CD8-positive, alpha-beta T cell (primary cell): ENCODE measurements at regions of chr19 and their contacts with region 1.

Region 1: DNA sequence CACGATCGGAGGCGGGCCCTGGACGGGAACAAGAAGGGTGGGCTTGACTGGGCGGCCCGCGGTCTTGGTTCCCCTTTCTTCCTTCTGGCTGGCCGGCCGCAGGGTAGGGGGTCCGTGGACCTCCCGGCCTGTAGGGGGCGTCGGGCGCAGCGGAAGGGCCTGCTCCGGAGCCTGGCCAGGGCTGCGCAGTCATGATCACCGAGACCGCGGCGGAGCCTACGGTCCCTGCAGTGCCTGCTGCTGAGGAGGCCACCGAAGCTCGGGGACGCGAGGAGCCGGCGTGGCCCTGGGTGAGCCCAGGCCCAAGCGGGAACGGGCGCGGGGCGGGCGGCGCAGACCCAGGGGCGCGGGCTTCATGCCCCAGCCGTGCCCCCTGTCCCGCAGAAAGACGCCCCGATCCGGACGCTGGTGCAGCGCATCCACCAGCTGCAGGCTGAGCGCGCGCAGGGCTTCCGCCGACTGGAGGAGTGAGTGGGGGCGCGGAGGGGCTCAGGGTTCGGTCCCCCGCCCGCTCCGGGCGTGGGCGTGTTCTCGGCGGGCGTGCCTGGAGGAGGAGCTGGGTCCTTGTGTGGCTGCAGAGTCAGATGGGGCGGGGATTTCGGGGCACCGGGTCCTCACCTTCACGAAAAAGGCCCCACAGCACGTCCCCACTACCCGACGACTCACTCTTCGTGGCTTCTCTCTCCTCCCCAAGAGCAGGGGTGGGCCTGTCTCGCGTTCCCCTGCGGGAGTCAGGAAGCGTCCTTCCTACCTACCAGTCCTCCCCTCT is at the start of gene REX1BD:
- DNase-seq: peak; percentile 71 to 94 (median 89)
- ATAC-seq: peak; percentile 81
- H3K4me3 ChIP-seq: peak within 1 kb of the TSS; percentile 62 to 83
- H3K4me3 Mint-ChIP-seq: peak within 1 kb of the TSS; percentile 93
- H3K27ac ChIP-seq: peak within 1 kb of the TSS; percentile 83 to 86
- H3K27ac Mint-ChIP-seq: peak within 1 kb of the TSS; percentile 95
- H3K4me1 ChIP-seq: peaks cover 31% of the 10 kb centered on the region
- H3K4me1 Mint-ChIP-seq: peaks cover 34% of the 10 kb centered on the region
- H3K27me3 ChIP-seq: no peaks in the 10 kb centered on the region
- H3K27me3 Mint-ChIP-seq: no peaks in the 10 kb centered on the region
- CTCF ChIP-seq: peak; percentile 77
- total RNA-seq, gene REX1BD: 85.6 to 91.1 TPM

Region 2: GRCh38 chr19:18450931-18451845 is 137.6 kb before region 1 on chr19:
- CTCF ChIA-PET with region 1: interaction called, 12 read pairs
- POLR2A ChIA-PET with region 1: no interaction called
- intact Hi-C with region 1: no loop called
- DNase-seq: peak; percentile 79 to 94 (median 85)
- ATAC-seq: peak; percentile 97
- H3K4me3 ChIP-seq: no peak overlapping the region
- H3K4me3 Mint-ChIP-seq: no peak overlapping the region
- H3K27ac ChIP-seq: no peak overlapping the region
- H3K27ac Mint-ChIP-seq: no peak overlapping the region
- H3K4me1 ChIP-seq: peaks cover 2% of the 10 kb centered on the region
- H3K4me1 Mint-ChIP-seq: peaks cover 2% of the 10 kb centered on the region
- H3K27me3 ChIP-seq: no peaks in the 10 kb centered on the region
- H3K27me3 Mint-ChIP-seq: no peaks in the 10 kb centered on the region
- CTCF ChIP-seq: peak; percentile 92

Region 3: GRCh38 chr19:18542936-18543815 is 45.6 kb before region 1 on chr19 and contains the start of gene FKBP8:
- CTCF ChIA-PET with region 1: interaction called, 7 read pairs
- POLR2A ChIA-PET with region 1: interaction called, 3 read pairs
- intact Hi-C with region 1: loop called (anchors 1 to 5 kb)
- DNase-seq: peak; percentile 86 to 96 (median 94)
- ATAC-seq: peak; percentile 97
- H3K4me3 ChIP-seq: peak within 1 kb of the TSS; percentile 58 to 62
- H3K4me3 Mint-ChIP-seq: peak within 1 kb of the TSS; percentile 89
- H3K27ac ChIP-seq: peak within 1 kb of the TSS; percentile 64 to 86
- H3K27ac Mint-ChIP-seq: peak within 1 kb of the TSS; percentile 96
- H3K4me1 ChIP-seq: peaks cover 20% of the 10 kb centered on the region
- H3K4me1 Mint-ChIP-seq: peaks cover 26% of the 10 kb centered on the region
- H3K27me3 ChIP-seq: no peaks in the 10 kb centered on the region
- H3K27me3 Mint-ChIP-seq: no peaks in the 10 kb centered on the region
- CTCF ChIP-seq: no peak
- total RNA-seq, gene FKBP8: 155 to 158 TPM

Region 4: DNA sequence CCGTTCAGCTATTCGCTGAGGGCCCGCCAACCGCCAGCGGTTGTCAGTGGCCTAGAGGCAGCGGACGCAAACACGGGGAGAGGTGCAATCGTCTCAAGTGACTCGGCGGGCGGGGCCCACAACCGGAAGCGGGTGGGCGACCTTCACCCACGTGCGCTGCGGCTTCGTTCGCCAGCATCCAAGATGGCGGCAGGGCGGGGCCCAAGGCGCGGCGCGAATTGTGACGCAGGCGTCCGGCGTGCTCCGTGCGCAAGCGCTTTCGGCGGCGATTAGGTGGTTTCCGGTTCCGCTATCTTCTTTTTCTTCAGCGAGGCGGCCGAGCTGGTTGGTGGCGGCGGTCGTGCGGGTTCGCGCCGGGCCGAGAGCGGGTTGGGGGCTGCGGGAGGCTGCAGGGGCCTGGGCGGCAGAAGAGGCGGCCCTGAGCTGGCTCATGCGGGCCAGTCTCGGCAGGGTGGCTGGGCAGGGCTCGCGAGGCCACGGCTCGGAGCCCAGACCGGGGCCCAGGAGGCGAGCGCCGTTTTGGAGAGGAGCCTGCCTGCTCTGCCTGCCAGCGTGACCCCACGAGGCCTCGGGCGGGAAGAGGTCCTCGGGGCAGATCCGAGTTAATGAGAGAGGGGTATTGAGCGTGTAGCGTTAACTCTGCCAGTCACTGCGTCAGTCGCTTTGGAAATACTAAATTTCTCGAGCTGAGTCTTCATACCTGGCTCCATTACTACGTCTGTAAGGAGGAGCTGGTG is 17.1 kb before region 1 on chr19 and contains the start of gene UBA52:
- CTCF ChIA-PET with region 1: interaction called, 11 read pairs
- POLR2A ChIA-PET with region 1: interaction called, 56 read pairs
- intact Hi-C with region 1: loop called (anchors 1 kb)
- DNase-seq: peak; percentile 98 to 100 (median 99)
- ATAC-seq: peak; percentile 91
- H3K4me3 ChIP-seq: peak within 1 kb of the TSS; percentile 94 to 97
- H3K4me3 Mint-ChIP-seq: peak within 1 kb of the TSS; percentile 95
- H3K27ac ChIP-seq: peak within 1 kb of the TSS; percentile 95 to 96
- H3K27ac Mint-ChIP-seq: peak within 1 kb of the TSS; percentile 97
- H3K4me1 ChIP-seq: peaks cover 16% of the 10 kb centered on the region
- H3K4me1 Mint-ChIP-seq: peaks cover 19% of the 10 kb centered on the region
- H3K27me3 ChIP-seq: no peaks in the 10 kb centered on the region
- H3K27me3 Mint-ChIP-seq: no peaks in the 10 kb centered on the region
- CTCF ChIP-seq: no peak
- total RNA-seq, gene UBA52: 2,140 to 2,193 TPM

Region 5: GRCh38 chr19:18831524-18832305 is 242.9 kb after region 1 on chr19 and contains the start of gene UPF1:
- CTCF ChIA-PET with region 1: interaction called, 6 read pairs
- POLR2A ChIA-PET with region 1: interaction called, 8 read pairs
- intact Hi-C with region 1: loop called (anchors 2 kb)
- DNase-seq: peak; percentile 92 to 98 (median 96)
- ATAC-seq: peak; percentile 79
- H3K4me3 ChIP-seq: peak within 1 kb of the TSS; percentile 80 to 86
- H3K4me3 Mint-ChIP-seq: peak within 1 kb of the TSS; percentile 92
- H3K27ac ChIP-seq: peak within 1 kb of the TSS; percentile 69 to 73
- H3K27ac Mint-ChIP-seq: peak within 1 kb of the TSS; percentile 89
- H3K4me1 ChIP-seq: peaks cover 41% of the 10 kb centered on the region
- H3K4me1 Mint-ChIP-seq: peaks cover 38% of the 10 kb centered on the region
- H3K27me3 ChIP-seq: peaks cover 0 to 3% of the 10 kb centered on the region in 2 experiments
- H3K27me3 Mint-ChIP-seq: peaks cover 2% of the 10 kb centered on the region
- CTCF ChIP-seq: no peak
- total RNA-seq, gene UPF1: 157 to 175 TPM

Region 6: DNA sequence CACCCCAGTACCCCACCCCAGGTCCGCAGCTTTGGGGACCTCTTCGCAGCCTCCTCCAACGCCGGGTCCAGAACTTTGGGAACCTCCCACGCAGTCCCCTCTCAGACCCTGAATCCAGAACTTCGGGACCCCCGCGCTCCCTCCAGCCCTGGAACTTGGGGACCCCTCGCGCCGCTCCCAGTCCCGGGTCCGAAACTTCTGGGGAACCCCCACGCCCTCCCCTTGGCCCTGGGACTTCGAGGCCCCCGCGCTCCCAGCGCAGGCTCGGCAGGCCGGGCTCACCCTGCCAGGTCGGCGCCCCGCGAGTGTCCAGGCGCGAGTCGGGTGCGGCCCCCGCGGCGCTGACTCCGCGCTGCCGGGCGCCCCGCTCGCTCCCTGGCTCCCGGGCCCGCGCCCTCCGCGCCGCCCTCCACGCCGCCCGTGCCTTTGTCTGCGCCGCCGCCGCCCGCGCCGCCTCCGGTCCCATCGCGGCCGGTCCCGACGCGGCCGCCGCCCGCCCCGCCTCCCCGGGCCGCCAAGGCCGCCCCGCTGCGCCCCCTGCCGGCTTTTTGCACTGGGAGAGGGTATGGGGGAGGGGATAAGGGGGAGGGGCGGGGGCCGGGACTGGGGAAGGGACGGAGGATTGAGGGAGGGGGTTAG is 352.1 kb after region 1 on chr19 and contains the start of gene HOMER3:
- CTCF ChIA-PET with region 1: no interaction called
- POLR2A ChIA-PET with region 1: no interaction called
- intact Hi-C with region 1: loop called in 1 of 2 experiments (anchors 10 kb)
- DNase-seq: peak; percentile 53 to 85 (median 76)
- ATAC-seq: peak; percentile 87
- H3K4me3 ChIP-seq: peak within 1 kb of the TSS in 1 of 2 experiments; percentile 28
- H3K4me3 Mint-ChIP-seq: peak within 1 kb of the TSS; percentile 69
- H3K27ac ChIP-seq: no peak within 1 kb of the TSS
- H3K27ac Mint-ChIP-seq: no peak within 1 kb of the TSS
- H3K4me1 ChIP-seq: peaks cover 10% of the 10 kb centered on the region
- H3K4me1 Mint-ChIP-seq: peaks cover 8% of the 10 kb centered on the region
- H3K27me3 ChIP-seq: peaks cover 4 to 18% of the 10 kb centered on the region in 2 experiments
- H3K27me3 Mint-ChIP-seq: peaks cover 24% of the 10 kb centered on the region
- CTCF ChIP-seq: no peak
- total RNA-seq, gene HOMER3: 0.90 TPM in 1 of 2 experiments, not detected in the other